ENCODE measurements at regions of chr1 and their contacts with region 1.

Region 1: GRCh38 chr1:117758444-117759316 is 152.8 kb downstream of the TENT5C start:
- DNase-seq: peak; percentile 51 to 85
- ATAC-seq: peak; percentile 87 to 94 (median 94)
- H3K4me3 ChIP-seq: peak overlapping the region; percentile 25
- H3K4me3 Mint-ChIP-seq: peak overlapping the region; percentile 84
- H3K27ac ChIP-seq: no peak overlapping the region
- H3K27ac Mint-ChIP-seq: peak overlapping the region in 1 of 2 donors; percentile 16
- H3K4me1 ChIP-seq: peaks cover 12% of the 10 kb centered on the region
- H3K4me1 Mint-ChIP-seq: peaks cover 11% of the 10 kb centered on the region in 2 donors
- H3K27me3 ChIP-seq: peaks cover 6% of the 10 kb centered on the region
- H3K27me3 Mint-ChIP-seq: peaks cover 21 to 47% of the 10 kb centered on the region in 2 donors
- CTCF ChIP-seq: peak; percentile 93

Region 2: DNA sequence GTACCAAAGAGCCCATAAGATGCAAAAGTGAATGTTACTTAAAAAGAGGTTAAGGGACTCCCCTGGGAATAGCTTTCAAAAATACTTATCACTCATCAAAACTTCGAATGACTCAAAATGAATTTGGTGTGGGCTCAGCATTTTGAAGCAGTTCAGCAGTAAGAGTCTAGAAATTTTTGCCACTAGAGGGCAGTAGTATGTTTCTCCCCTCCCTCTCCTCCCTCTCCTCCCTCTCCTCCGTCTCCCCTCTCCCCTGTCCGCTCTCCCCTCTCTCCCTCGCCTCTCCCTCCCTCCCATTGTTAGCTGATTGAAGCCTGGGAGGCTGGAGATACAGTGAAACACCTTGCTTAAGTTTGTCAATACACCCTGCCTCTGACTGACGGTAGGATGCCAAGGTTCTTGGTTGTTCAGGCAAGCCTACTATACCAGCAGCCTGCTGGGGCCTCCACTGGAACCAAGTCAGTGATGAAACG is 223.6 kb before region 1 on chr1:
- intact Hi-C with region 1: loop called (anchors 1 kb)
- DNase-seq: peak in 1 of 2 donors; percentile 83
- ATAC-seq: peak; percentile 82 to 94 (median 91)
- H3K4me3 ChIP-seq: no peak overlapping the region
- H3K4me3 Mint-ChIP-seq: no peak overlapping the region
- H3K27ac ChIP-seq: no peak overlapping the region
- H3K27ac Mint-ChIP-seq: no peak overlapping the region
- H3K4me1 ChIP-seq: peaks cover 4% of the 10 kb centered on the region
- H3K4me1 Mint-ChIP-seq: peaks cover 0 to 6% of the 10 kb centered on the region in 2 donors
- H3K27me3 ChIP-seq: no peaks in the 10 kb centered on the region
- H3K27me3 Mint-ChIP-seq: peaks cover 0 to 4% of the 10 kb centered on the region in 2 donors
- CTCF ChIP-seq: peak; percentile 61